ENCODE measurements at regions of chr9 and their contacts with region 1.

Region 1: DNA sequence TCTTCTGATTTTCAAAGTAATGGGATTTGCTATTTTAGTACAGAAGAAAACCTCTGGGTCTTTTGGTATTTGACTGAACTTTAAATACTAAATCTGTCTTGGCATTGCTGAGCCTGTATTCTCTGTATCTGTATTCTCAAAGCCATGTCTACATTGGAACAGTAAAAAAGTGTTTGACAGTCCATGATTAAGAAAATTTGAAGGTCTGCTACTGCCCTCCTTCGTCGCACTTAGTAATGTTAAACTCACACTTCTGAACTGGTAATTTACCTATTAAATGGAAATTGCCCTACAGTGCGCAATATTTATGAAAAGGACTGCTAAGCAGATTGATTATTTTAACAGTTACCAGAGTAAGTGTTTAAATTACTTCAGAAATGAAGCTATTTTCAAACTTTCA is 165.7 kb upstream of the SMC2 start:
- DNase-seq: no peak
- H3K4me3 ChIP-seq: no peak overlapping the region
- H3K27ac ChIP-seq: no peak overlapping the region
- H3K4me1 ChIP-seq: no peaks in the 10 kb centered on the region
- H3K27me3 ChIP-seq: no peaks in the 10 kb centered on the region
- CTCF ChIP-seq: no peak
- EP300 ChIP-seq: no peak
- POLR2A ChIP-seq: no peak

Region 2: DNA sequence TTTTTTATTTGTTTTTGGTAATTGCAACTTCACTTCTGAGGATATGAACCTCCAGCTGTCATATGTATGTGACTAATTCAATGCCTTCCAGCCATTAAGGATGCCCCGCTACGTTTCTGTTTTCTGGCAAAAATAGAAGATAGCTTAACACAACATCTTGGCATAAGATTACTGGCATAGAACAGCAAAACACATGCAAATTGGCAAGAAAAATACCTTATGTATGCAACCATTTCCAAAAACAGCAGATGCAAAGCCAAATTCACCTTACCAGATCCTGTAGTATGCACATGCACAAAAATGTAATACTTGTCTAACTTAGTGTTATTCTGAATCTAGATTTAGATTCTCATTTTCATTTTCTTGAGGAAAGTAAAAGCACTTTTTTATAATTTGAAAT is 1394.4 kb before region 1 on chr9:
- in situ Hi-C with region 1: no loop called
- intact Hi-C with region 1: no loop called
- DNase-seq: no peak
- H3K4me3 ChIP-seq: no peak overlapping the region
- H3K27ac ChIP-seq: no peak overlapping the region
- H3K4me1 ChIP-seq: no peaks in the 10 kb centered on the region
- H3K27me3 ChIP-seq: no peaks in the 10 kb centered on the region
- CTCF ChIP-seq: no peak
- EP300 ChIP-seq: no peak
- POLR2A ChIP-seq: no peak

Region 3: DNA sequence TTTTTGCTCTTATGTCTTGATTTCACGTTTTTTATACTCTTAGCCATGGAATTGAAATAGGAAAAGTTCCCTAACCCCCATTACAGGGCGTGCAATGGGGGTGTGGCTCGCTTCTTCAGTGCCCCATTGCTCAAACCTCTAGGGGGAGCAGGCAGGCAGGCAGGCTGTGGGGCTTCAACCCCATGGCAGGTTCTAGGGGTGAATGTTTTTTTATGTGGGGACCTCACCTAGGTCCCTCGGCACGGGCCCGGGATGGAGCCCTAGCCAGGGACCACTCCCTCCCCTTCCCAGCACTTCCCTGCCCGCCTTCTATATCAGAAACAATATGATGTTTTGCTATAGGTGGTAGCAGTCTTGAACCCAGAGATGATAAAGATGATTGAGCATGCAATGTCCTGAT is 55.6 kb before region 1 on chr9:
- in situ Hi-C with region 1: no loop called
- intact Hi-C with region 1: loop called (anchors 5 kb)
- DNase-seq: no peak
- H3K4me3 ChIP-seq: no peak overlapping the region
- H3K27ac ChIP-seq: no peak overlapping the region
- H3K4me1 ChIP-seq: no peaks in the 10 kb centered on the region
- H3K27me3 ChIP-seq: no peaks in the 10 kb centered on the region
- CTCF ChIP-seq: no peak
- EP300 ChIP-seq: no peak
- POLR2A ChIP-seq: no peak

Measured in transverse colon (tissue), 4 donors.